Mammary epithelial cell (primary cell): ENCODE measurements at regions of chr20 and their contacts with region 1.

Region 1: DNA sequence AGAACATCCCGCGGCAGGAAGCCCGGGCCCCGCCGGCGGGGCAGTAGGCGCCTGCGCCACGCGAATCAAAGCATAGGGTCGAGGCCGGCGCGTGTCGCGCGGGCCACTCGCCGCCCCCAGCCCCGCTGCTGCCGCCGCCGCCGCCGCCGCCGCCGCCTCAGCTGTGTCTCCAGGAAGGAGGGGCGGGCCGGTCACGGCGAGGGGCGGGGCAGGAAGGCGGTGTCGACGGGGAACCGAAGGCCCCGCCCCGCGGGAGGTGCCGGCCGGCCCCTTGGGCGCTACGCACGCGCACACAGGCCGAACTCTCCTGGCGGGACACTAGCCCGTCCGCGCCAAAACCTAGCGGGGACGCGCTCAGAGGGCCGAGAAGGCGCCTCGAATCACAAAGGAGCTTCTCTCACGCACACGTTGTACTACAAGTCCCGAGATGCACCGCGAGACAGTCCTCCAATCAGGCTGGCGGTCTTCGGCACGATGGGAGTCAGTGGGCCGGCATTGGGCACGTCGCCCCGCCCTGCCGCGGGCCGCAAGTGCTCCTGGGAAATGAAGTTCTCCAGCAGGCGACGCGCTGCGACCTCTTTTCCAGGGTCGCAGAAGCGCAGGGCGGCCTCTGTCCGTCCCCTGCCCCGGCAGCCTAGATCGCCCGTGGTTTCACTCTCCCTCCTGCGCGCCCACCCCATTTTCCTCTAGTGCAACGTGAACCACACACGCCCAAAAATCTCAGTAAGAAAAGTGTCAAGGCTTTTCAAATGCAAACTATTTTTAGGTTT is at the start of gene RALGAPA2:
- DNase-seq: peak; percentile 96
- H3K4me3 ChIP-seq: peak within 1 kb of the TSS; percentile 68 to 89 (median 76)
- H3K27ac ChIP-seq: peak within 1 kb of the TSS; percentile 67
- H3K4me1 ChIP-seq: peaks cover 16% of the 10 kb centered on the region
- H3K27me3 ChIP-seq: no peaks in the 10 kb centered on the region
- CTCF ChIP-seq: peak in 1 of 2 donors; percentile 12
- total RNA-seq, gene RALGAPA2: 9.5 to 12.5 TPM

Region 2: GRCh38 chr20:20312562-20312961 is 400.1 kb before region 1 on chr20:
- CTCF ChIA-PET with region 1: no interaction called
- dilution Hi-C with region 1: no loop called
- in situ Hi-C with region 1: no loop called
- intact Hi-C with region 1: no loop called
- DNase-seq: no peak
- H3K4me3 ChIP-seq: no peak overlapping the region
- H3K27ac ChIP-seq: no peak overlapping the region
- H3K4me1 ChIP-seq: no peaks in the 10 kb centered on the region
- H3K27me3 ChIP-seq: no peaks in the 10 kb centered on the region
- CTCF ChIP-seq: no peak

Region 3: GRCh38 chr20:20731945-20732296 is 19.3 kb after region 1 on chr20:
- CTCF ChIA-PET with region 1: no interaction called
- dilution Hi-C with region 1: no loop called
- in situ Hi-C with region 1: no loop called
- intact Hi-C with region 1: loop called (anchors 2 kb)
- DNase-seq: peak; percentile 70
- H3K4me3 ChIP-seq: no peak overlapping the region
- H3K27ac ChIP-seq: no peak overlapping the region
- H3K4me1 ChIP-seq: no peaks in the 10 kb centered on the region
- H3K27me3 ChIP-seq: no peaks in the 10 kb centered on the region
- CTCF ChIP-seq: no peak

Region 4: GRCh38 chr20:20939006-20939405 is 226.3 kb after region 1 on chr20:
- CTCF ChIA-PET with region 1: no interaction called
- dilution Hi-C with region 1: no loop called
- in situ Hi-C with region 1: no loop called
- intact Hi-C with region 1: no loop called
- DNase-seq: no peak
- H3K4me3 ChIP-seq: no peak overlapping the region
- H3K27ac ChIP-seq: no peak overlapping the region
- H3K4me1 ChIP-seq: no peaks in the 10 kb centered on the region
- H3K27me3 ChIP-seq: no peaks in the 10 kb centered on the region
- CTCF ChIP-seq: no peak